Activated CD4-positive, alpha-beta T cell treated with anti-CD3 and anti-CD28 coated beads, Interleukin-2, amount 10 ng/mL, durations not matched to agents 24 days and 14 days (primary cell): ENCODE measurements at regions of chr10 and their contacts with region 1.

Region 1: DNA sequence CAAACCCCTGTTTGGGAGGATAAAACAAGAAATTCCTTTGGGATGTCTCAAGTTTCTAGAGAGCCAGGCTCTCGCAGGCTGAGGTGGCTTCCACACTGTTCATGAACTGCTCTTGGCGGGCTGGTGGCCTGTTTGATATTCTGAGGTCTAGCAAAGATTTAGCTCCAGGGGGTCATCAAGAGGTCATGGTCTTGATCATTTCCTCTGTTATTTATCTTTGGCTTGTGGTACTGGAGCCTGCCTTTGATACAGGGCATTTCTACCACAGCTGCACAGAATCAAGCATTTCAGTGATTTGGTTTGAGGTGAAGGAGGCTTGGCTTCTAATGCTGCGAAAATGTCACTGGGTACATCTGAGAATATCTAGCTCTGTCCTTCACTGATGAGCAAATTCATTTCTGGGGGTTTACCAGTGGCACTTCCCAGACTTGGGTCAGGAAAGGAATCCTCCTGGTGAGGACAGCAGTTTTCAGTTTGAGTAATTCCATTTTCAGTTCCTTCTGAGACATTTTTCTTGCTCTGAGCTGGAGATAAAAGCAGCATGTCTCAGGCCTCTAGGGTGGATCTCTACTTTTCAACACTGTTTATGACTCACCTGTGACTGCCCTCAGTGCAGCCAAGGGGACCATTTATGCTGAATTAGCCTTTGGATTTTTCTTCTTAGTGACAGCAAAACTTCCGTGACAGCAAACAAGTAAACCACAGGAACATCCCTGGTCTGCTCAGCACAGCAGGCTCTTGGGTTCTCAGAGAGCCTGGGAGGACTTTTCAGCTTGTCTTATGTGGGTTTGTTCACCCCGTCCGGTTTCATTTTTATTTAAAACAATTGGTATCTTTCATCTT is 312.0 kb downstream of the RNLS start:
- DNase-seq: peak; percentile 89
- H3K4me3 Mint-ChIP-seq: peak overlapping the region; percentile 37
- H3K27ac Mint-ChIP-seq: peak overlapping the region; percentile 84
- H3K4me1 Mint-ChIP-seq: peaks cover 46% of the 10 kb centered on the region
- H3K27me3 Mint-ChIP-seq: peaks cover 12% of the 10 kb centered on the region

Region 2: DNA sequence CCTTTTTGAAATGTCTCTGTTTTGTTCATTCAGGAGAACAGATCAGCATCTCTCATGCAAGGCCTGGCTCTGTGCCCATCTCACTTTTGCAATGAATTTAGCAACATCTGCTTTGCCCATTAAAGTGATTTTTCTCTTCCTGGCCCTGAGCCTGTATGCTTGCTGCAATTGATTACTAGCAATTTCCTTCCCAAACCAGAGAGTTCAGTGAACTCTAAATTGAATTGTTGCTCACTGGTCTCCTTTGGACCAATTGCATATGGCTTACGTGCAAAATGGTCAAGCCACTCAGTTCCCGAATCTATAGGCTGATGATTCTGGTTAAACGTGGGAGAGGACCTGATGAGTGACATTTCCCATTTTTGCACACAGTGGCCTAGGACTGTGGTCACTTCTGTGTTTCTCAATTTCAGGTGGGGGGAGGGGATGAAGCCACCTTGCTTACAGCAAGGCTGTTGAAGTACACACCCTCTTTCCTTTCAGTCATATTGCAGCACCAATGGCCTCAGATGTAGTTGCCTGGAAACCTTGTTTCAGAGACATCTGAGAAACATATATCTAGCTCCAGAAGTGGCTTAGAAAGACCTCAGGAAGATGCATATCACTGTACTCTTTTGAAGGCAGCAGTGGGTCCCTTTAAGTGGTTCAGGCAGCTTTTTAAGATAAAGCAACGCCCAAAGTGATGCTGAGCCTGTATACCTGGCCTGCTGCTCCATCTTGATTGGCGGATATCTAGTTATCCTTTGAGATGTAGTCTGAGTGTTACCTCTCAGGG is 206.3 kb before region 1 on chr10:
- intact Hi-C with region 1: loop called (anchors 1 kb)
- DNase-seq: peak; percentile 72
- H3K4me3 Mint-ChIP-seq: no peak overlapping the region
- H3K27ac Mint-ChIP-seq: peak overlapping the region; percentile 29
- H3K4me1 Mint-ChIP-seq: peaks cover 40% of the 10 kb centered on the region
- H3K27me3 Mint-ChIP-seq: peaks cover 8% of the 10 kb centered on the region

Region 3: DNA sequence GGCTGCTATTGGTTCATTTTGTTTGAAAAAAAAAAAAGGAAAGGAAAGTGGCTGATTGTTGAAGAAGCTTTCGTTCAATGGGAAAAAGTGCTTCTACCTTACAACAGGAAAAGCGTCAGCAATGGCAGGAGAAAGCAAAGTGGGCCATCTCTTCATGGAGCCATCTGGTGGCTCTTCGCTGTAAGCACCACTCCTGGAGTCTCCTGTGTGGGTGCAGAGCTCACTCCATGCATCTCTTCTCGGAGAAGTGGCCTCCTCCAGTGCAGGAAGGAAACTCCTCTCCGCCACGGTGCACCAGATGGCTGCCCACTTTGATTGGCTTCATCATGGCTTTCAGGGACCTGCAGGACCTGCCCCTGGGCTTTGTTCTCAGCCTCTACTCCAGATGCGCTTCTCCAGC is 156.7 kb before region 1 on chr10:
- intact Hi-C with region 1: loop called (anchors 1 kb)
- DNase-seq: peak; percentile 65
- H3K4me3 Mint-ChIP-seq: no peak overlapping the region
- H3K27ac Mint-ChIP-seq: no peak overlapping the region
- H3K4me1 Mint-ChIP-seq: peaks cover 28% of the 10 kb centered on the region
- H3K27me3 Mint-ChIP-seq: peaks cover 3% of the 10 kb centered on the region

Region 4: GRCh38 chr10:88131511-88132154 is 139.5 kb before region 1 on chr10:
- intact Hi-C with region 1: no loop called
- DNase-seq: no peak
- H3K4me3 Mint-ChIP-seq: no peak overlapping the region
- H3K27ac Mint-ChIP-seq: no peak overlapping the region
- H3K4me1 Mint-ChIP-seq: peaks cover 3% of the 10 kb centered on the region
- H3K27me3 Mint-ChIP-seq: peaks cover 17% of the 10 kb centered on the region

Region 5: DNA sequence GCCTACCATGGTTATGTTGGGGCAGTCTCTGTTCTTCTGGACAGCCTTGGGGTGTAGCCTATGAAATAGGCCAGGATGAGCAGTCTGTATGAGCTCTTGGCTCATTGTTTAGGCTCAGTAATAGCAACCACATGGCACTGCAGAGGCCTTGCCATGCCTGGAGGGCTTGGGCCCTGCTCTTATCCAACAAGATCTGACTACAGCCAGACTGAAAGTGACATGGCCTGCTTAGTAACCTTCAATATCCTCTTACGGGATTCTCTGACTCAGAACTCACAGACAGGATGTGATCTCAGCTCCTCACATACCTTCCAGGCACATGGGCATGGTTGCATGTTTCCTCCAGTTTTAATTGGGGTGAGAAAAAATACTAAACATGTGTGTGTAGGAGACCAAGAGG is 118.4 kb before region 1 on chr10:
- intact Hi-C with region 1: loop called (anchors 1 kb)
- DNase-seq: peak; percentile 83
- H3K4me3 Mint-ChIP-seq: peak overlapping the region; percentile 57
- H3K27ac Mint-ChIP-seq: peak overlapping the region; percentile 91
- H3K4me1 Mint-ChIP-seq: peaks cover 20% of the 10 kb centered on the region
- H3K27me3 Mint-ChIP-seq: no peaks in the 10 kb centered on the region

Region 6: GRCh38 chr10:88281592-88282347 is 10.7 kb after region 1 on chr10:
- intact Hi-C with region 1: loop called (anchors 1 kb)
- DNase-seq: no peak
- H3K4me3 Mint-ChIP-seq: no peak overlapping the region
- H3K27ac Mint-ChIP-seq: no peak overlapping the region
- H3K4me1 Mint-ChIP-seq: peaks cover 29% of the 10 kb centered on the region
- H3K27me3 Mint-ChIP-seq: peaks cover under 1% of the 10 kb centered on the region

Region 7: GRCh38 chr10:89086801-89087521 is 815.9 kb after region 1 on chr10:
- intact Hi-C with region 1: loop called (anchors 5 kb)
- DNase-seq: peak; percentile 53
- H3K4me3 Mint-ChIP-seq: no peak overlapping the region
- H3K27ac Mint-ChIP-seq: no peak overlapping the region
- H3K4me1 Mint-ChIP-seq: peaks cover 9% of the 10 kb centered on the region
- H3K27me3 Mint-ChIP-seq: peaks cover 8% of the 10 kb centered on the region